Gastrocnemius medialis (tissue), 4 donors: ENCODE measurements at regions of chr15 and their contacts with region 1.

Region 1: DNA sequence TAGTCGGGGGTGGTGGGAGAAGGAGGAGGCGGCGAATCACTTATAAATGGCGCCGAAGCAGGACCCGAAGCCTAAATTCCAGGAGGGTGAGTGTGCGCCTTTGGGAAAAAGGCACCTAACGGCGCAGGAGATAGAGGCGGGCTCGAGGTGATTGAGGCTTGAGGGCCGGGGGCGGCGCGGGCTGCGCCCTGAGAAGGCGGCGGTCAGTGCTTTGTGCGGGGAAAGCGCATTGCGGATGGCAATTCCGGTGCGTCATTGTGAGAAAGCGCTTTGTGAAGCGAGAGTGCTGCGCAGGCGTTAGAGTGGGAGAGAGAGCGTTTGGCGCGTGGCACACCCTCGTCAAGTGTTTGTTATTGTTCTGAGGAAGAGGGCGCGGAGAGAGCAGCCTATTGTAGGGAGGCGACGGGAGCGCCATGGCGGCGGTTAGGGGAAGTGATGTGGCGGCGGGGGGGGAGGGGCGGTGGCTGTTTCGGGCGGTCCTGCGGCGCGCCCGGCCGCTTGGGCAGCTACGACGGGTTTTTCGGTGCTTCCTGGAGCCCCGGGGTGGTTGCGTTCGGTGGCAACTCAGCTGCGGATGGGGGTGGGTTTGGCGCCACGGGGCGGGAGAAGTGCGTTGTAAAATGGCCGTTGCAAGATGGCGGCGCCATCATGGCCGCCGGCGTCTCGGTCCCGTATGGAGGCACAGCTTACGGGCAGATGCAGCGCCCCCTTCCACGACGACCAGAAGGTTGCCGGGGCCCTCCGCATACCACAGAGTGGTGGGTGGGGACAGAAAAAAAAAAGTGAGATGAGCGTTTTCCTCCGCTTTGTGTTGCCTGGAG is 492 bp downstream of the MORF4L1 start:
- DNase-seq: peak; percentile 48 to 62
- ATAC-seq: peak; percentile 69 to 74
- H3K4me3 ChIP-seq: peak overlapping the region; percentile 84 to 100 (median 96)
- H3K27ac ChIP-seq: peak overlapping the region; percentile 94 to 100 (median 99)
- H3K4me1 ChIP-seq: peaks cover 38 to 39% of the 10 kb centered on the region in 2 donors
- H3K27me3 ChIP-seq: no peaks in the 10 kb centered on the region
- CTCF ChIP-seq: peak in 3 of 5 experiments; percentile 8 to 36 (median 27)
- POLR2A ChIP-seq: peak; percentile 91

Region 2: GRCh38 chr15:78808550-78808949 is 64.6 kb before region 1 on chr15:
- in situ Hi-C with region 1: no loop called
- intact Hi-C with region 1: no loop called
- DNase-seq: no peak
- ATAC-seq: no peak
- H3K4me3 ChIP-seq: no peak overlapping the region
- H3K27ac ChIP-seq: no peak overlapping the region
- H3K4me1 ChIP-seq: peaks cover 0 to 8% of the 10 kb centered on the region in 2 donors
- H3K27me3 ChIP-seq: peaks cover 0 to 12% (median 4%) of the 10 kb centered on the region in 3 donors
- CTCF ChIP-seq: peak in 1 of 5 experiments; percentile 13
- POLR2A ChIP-seq: no peak

Region 3: DNA sequence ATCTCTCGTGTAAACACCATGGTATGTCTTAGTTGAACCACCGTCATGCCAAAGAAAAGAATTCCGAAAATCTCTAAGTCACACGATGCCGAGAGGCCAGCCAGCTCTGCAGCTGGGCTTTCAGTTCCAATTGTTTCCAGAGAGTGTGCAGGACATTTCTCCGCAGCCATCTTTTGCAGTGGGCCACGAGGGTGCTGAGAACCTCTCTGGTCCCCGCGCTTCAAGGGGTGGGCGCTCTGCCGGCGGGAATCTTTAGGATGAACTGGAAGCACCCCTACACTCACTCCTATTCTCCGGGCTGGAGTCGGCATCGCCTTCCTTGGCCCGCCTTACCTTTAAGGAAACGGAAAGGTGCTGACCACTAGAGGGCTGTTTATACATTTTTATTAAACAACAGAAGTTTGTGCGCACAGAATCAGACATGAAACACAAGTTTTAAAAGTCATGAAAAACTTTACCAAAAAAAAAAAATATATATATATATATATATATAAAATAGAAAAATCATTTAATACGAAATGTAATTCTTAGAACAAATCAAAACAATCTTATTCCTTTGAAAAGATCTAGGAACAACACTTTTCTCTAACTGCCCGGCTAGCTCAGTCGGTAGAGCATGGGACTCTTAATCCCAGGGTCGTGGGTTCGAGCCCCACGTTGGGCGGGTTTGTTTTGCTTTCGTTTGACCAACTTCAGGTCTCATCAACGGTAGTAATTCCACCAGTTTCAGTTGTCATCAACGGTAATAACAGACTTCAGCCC is 13.0 kb before region 1 on chr15:
- in situ Hi-C with region 1: no loop called
- intact Hi-C with region 1: loop called (anchors 1 kb)
- DNase-seq: peak; percentile 23 to 57
- ATAC-seq: peak; percentile 83 to 88
- H3K4me3 ChIP-seq: peak overlapping the region; percentile 43 to 60 (median 56)
- H3K27ac ChIP-seq: peak overlapping the region; percentile 1 to 51 (median 18)
- H3K4me1 ChIP-seq: no peaks in the 10 kb centered on the region
- H3K27me3 ChIP-seq: no peaks in the 10 kb centered on the region
- CTCF ChIP-seq: peak; percentile 25 to 57 (median 40)
- POLR2A ChIP-seq: no peak